HCT116 (cell line): ENCODE measurements at regions of chr1 and their contacts with region 1.

Region 1: DNA sequence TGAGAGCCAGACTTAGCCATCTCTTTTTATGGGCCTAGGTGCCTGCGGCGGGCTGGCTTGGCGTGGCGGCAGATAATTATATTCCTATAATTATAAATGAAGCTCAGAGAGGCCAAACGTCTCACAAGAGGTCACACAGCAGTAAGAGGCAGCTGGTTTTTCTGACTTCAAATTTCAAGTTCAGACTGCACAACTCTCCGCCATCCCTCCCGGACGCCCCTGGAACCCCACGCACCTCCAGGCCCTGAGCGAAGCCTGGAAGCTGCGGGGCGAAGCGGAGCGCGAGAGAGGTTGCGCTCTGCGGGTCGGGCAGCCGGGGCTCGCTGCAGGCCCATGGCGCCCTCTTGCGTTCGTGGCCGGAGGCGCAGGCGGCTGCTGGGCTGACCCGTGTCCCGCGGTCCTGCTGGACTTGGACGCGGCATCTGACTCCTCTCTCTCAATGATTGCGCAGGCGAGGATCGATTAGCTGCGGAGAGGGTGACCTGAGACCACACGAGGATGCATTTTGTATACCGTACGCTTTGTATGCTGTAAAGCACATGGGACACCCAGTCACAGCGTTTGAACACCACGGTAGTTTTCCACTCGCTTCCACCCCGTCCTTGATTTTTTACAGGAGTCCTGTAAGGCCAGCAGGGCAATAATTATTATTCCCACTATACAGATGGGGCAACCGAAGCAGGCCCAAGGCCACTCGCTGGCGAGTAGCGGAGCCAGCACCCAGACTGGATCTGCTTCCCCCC is 272.7 kb downstream of the FOXD2 start:
- DNase-seq: peak; percentile 28
- ATAC-seq: peak; percentile 88
- H3K4me3 ChIP-seq: peak overlapping the region; percentile 16 to 57; a peak in 3 of 4 replicates
- H3K27ac ChIP-seq: no peak overlapping the region
- H3K4me1 ChIP-seq: peaks cover 0 to 18% of the 10 kb centered on the region in 2 experiments; a peak in 1 of 4 replicates
- H3K27me3 ChIP-seq: peaks cover 28% of the 10 kb centered on the region
- CTCF ChIP-seq: peak; percentile 91 to 98 (median 92)
- POLR2A ChIP-seq: no peak
- RAD21 ChIP-seq: peak; percentile 96

Region 2: DNA sequence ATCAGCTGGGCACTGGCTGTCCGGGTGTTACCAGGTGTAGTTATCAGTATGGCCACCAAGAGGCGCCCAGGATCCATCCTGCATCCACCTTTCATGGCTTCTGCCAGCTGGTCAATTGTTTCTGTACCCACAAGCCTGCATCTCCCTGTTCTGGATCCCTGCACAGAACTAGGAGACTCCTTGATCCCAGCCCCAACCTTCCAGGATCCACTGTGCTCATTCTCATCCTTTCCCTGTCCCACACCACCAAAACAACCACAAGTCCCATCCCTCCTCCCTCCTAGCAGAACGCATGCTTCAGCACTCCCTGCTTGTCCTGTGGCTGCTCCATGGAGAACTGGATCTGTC is 321.6 kb before region 1 on chr1:
- CTCF ChIA-PET with region 1: interaction called, 10 read pairs
- POLR2A ChIA-PET with region 1: no interaction called
- RAD21 ChIA-PET with region 1: no interaction called
- intact Hi-C with region 1: loop called (anchors 1 kb)
- DNase-seq: peak; percentile 35
- ATAC-seq: peak; percentile 91
- H3K4me3 ChIP-seq: no peak overlapping the region
- H3K27ac ChIP-seq: no peak overlapping the region
- H3K4me1 ChIP-seq: no peaks in the 10 kb centered on the region
- H3K27me3 ChIP-seq: no peaks in the 10 kb centered on the region
- CTCF ChIP-seq: peak; percentile 73 to 80 (median 79)
- POLR2A ChIP-seq: no peak
- RAD21 ChIP-seq: peak; percentile 87

Region 3: GRCh38 chr1:47416319-47417169 is 294.0 kb before region 1 on chr1:
- CTCF ChIA-PET with region 1: no interaction called
- POLR2A ChIA-PET with region 1: no interaction called
- RAD21 ChIA-PET with region 1: no interaction called
- intact Hi-C with region 1: no loop called
- DNase-seq: no peak
- ATAC-seq: no peak
- H3K4me3 ChIP-seq: no peak overlapping the region
- H3K27ac ChIP-seq: no peak overlapping the region
- H3K4me1 ChIP-seq: no peaks in the 10 kb centered on the region
- H3K27me3 ChIP-seq: no peaks in the 10 kb centered on the region
- CTCF ChIP-seq: no peak
- POLR2A ChIP-seq: no peak
- RAD21 ChIP-seq: no peak

Region 4: DNA sequence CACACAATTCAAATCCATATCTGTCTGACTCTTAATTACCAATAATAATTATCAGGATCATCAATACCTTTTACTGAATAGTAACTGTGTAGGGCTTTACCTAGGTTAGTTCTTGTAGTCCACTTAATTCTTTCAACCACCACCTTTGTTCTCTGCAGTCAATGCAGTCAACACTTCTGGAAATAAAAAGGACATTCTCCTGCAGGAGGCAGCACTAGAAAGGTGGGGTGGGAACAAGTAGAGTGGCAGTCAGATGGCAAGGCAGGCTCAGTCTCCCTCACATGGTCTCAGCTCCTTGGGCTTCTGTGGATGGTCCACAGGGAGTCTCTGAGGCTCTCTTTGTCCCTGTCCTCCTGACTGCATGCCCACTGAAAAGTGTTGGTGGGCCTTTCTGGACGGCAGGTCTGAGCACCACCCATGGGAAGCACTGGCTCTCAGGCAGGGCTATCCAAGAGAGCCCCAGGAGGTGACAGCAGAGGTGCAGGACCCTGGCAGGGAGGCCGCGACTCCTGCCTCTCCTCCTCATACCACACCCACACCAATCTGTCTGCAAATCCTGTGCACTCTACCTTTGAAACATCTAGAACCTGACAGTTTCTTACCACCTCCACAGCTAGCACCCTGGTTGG is 35.3 kb before region 1 on chr1:
- CTCF ChIA-PET with region 1: no interaction called
- POLR2A ChIA-PET with region 1: no interaction called
- RAD21 ChIA-PET with region 1: no interaction called
- intact Hi-C with region 1: no loop called
- DNase-seq: no peak
- ATAC-seq: peak; percentile 57; the same call in 1 of the 2 replicates
- H3K4me3 ChIP-seq: no peak overlapping the region
- H3K27ac ChIP-seq: no peak overlapping the region
- H3K4me1 ChIP-seq: no peaks in the 10 kb centered on the region
- H3K27me3 ChIP-seq: no peaks in the 10 kb centered on the region
- CTCF ChIP-seq: peak in 2 of 3 experiments; percentile 11 to 14; a peak in 2 of 6 replicates
- POLR2A ChIP-seq: no peak
- RAD21 ChIP-seq: no peak

Region 5: GRCh38 chr1:48999321-48999720 is 1288.8 kb after region 1 on chr1:
- CTCF ChIA-PET with region 1: no interaction called
- POLR2A ChIA-PET with region 1: no interaction called
- RAD21 ChIA-PET with region 1: no interaction called
- intact Hi-C with region 1: no loop called
- DNase-seq: no peak
- ATAC-seq: no peak
- H3K4me3 ChIP-seq: no peak overlapping the region
- H3K27ac ChIP-seq: no peak overlapping the region
- H3K4me1 ChIP-seq: no peaks in the 10 kb centered on the region
- H3K27me3 ChIP-seq: no peaks in the 10 kb centered on the region
- CTCF ChIP-seq: no peak
- POLR2A ChIP-seq: no peak
- RAD21 ChIP-seq: no peak